ENCODE measurements at regions of chr11 and their contacts with region 1.

Region 1: GRCh38 chr11:60175860-60176275 is 7.0 kb downstream of the MS4A6A start:
- DNase-seq: no peak
- ATAC-seq: no peak
- H3K4me3 ChIP-seq: no peak overlapping the region
- H3K27ac ChIP-seq: no peak overlapping the region
- H3K4me1 ChIP-seq: peaks cover 0 to 29% (median 0%) of the 10 kb centered on the region in 9 donors
- H3K27me3 ChIP-seq: no peaks in the 10 kb centered on the region
- CTCF ChIP-seq: no peak

Region 2: DNA sequence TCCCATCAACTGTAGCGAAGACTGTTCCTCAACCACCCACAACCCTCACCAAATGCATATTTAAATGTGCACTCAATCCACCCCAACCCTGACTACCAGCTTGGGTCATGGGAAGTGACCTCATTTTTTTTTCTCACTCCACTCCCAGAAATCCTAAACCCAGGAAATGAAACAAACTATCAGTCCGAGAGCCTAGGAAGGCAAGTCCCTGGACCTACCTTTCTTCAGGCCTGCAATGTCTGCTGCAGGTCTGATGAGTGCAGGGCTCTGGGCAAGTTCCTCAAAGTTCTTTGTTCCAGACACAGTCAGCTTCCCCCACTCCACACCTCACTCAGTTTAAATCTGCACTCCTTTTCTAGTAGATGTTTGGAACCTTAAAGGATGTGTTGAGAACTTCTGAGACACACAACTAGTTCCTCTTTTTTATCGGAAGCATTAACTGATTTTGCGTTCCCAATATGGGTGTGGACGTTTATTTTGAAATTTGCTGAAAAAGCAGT is 66.9 kb after region 1 on chr11 and contains the start of gene MS4A4E:
- intact Hi-C with region 1: loop called in 1 of 10 experiments (anchors 10 kb)
- DNase-seq: no peak
- ATAC-seq: peak in 3 of 8 donors; percentile 41 to 52 (median 49)
- H3K4me3 ChIP-seq: peak within 1 kb of the TSS in 1 of 10 donors; percentile 7
- H3K27ac ChIP-seq: peak within 1 kb of the TSS in 1 of 10 donors; percentile 78
- H3K4me1 ChIP-seq: peaks cover 0 to 2% (median 0%) of the 10 kb centered on the region in 9 donors
- H3K27me3 ChIP-seq: peaks cover 0 to 11% (median 0%) of the 10 kb centered on the region in 7 donors
- CTCF ChIP-seq: no peak
- total RNA-seq, gene MS4A4E: 0.28 to 3.0 (median 0.82) TPM in 7 of 10 donors, not detected in the others

Measured in heart right ventricle (tissue), 16 donors.